Activated CD4-positive, alpha-beta T cell treated with anti-CD3 and anti-CD28 coated beads, Interleukin-2, amount 10 ng/mL, durations not matched to agents 24 days and 14 days (primary cell): ENCODE measurements at regions of chr1 and their contacts with region 1.

Region 1: GRCh38 chr1:92317836-92318493 is 19.1 kb downstream of the RPAP2 start:
- DNase-seq: peak; percentile 76
- H3K4me3 Mint-ChIP-seq: peak overlapping the region; percentile 61
- H3K27ac Mint-ChIP-seq: peak overlapping the region; percentile 76
- H3K4me1 Mint-ChIP-seq: peaks cover 54% of the 10 kb centered on the region
- H3K27me3 Mint-ChIP-seq: no peaks in the 10 kb centered on the region

Region 2: DNA sequence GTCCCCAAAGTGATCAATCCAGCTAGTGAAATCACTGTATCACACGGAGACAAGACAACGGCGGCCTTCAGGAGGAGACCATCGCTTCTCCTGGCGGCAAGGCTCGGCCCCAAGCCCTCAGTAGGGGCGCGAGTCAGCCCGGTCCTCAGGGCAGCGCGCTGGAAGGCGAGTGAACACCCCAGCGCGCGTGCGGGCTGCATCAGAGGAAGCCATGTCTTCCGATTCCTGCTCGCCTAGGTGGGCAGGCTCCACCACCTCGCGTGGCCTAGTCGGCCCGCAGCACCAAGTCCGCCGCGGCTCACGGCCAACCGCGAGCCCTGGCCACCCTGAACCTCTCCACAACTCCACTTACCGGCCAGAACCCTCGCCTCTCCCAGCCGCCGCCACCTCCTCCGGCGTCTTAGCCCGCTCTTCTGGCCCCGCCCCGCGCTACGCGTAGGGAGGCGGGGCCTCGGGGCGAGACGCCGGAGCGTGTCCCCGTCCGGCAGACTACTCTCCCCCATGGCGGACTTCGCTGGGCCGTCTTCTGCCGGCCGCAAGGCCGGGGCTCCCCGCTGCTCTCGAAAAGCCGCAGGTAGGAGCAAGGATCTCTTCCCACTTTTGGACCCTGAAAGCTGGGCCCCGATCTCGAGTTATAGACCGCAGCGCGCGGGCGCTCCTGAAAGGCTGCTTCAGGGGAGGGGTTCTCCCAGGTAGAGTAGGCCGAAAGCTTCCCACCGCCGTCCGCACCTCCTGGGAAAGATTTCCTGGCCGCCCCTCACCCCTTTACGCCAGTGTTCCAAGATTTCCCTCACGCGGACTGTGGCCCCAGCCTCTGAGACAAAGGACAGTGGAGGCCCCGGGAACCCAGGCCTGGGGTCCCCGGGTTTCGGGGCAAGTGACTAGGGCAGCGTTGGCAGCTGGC is 19.1 kb before region 1 on chr1 and contains the starts of genes GLMN and RPAP2:
- intact Hi-C with region 1: loop called (anchors 1 kb)
- DNase-seq: peak; percentile 94
- H3K4me3 Mint-ChIP-seq: peak within 1 kb of the TSS; percentile 99
- H3K27ac Mint-ChIP-seq: peak within 1 kb of the TSS; percentile 99
- H3K4me1 Mint-ChIP-seq: peaks cover 40% of the 10 kb centered on the region
- H3K27me3 Mint-ChIP-seq: no peaks in the 10 kb centered on the region
- total RNA-seq, gene GLMN: 24.2 and 28.5 TPM in 2 replicates
- total RNA-seq, gene RPAP2: 39.4 and 46.8 TPM in 2 replicates

Region 3: GRCh38 chr1:92367496-92367895 is 49.5 kb after region 1 on chr1:
- intact Hi-C with region 1: loop called (anchors 2 kb)
- DNase-seq: peak; percentile 65
- H3K4me3 Mint-ChIP-seq: peak overlapping the region; percentile 31
- H3K27ac Mint-ChIP-seq: no peak overlapping the region
- H3K4me1 Mint-ChIP-seq: peaks cover 42% of the 10 kb centered on the region
- H3K27me3 Mint-ChIP-seq: no peaks in the 10 kb centered on the region

Region 4: GRCh38 chr1:92458146-92458545 is 140.2 kb after region 1 on chr1:
- intact Hi-C with region 1: no loop called
- DNase-seq: no peak
- H3K4me3 Mint-ChIP-seq: no peak overlapping the region
- H3K27ac Mint-ChIP-seq: no peak overlapping the region
- H3K4me1 Mint-ChIP-seq: peaks cover 27% of the 10 kb centered on the region
- H3K27me3 Mint-ChIP-seq: no peaks in the 10 kb centered on the region

Region 5: DNA sequence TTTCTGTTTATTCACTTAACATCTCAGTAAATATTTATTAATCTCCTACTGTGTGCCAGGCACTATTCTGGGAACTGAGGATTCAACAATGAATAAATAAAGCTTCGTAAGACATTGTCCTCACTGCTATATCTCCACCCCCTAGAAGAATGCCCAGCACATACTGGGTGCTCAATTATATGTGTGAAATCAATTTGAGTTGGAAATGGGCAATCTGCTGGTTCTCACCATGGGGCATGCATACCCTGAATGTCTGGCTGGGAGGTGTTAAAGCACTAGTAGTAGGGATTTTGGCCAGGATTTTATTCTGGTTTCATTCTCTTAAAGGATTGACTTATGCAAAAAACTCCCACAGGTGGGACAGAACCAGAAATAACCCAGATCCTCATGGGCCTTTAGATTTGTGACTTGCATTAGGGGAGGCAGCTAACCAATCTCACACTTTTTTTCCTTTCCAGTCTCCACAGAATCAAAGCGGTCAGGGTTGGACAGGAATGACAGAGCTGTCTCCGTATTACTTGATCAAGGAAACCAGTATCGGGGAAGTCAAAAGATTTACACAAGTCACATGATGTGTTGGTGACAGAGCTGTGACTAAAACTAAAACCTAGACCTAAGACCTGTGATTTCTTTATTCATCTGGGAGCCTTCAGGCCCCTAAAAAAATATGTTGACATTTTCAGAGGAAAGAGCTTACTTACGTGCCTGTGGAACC is 156.0 kb after region 1 on chr1:
- intact Hi-C with region 1: loop called (anchors 2 kb)
- DNase-seq: peak; percentile 80
- H3K4me3 Mint-ChIP-seq: peak overlapping the region; percentile 48
- H3K27ac Mint-ChIP-seq: peak overlapping the region; percentile 89
- H3K4me1 Mint-ChIP-seq: peaks cover 67% of the 10 kb centered on the region
- H3K27me3 Mint-ChIP-seq: no peaks in the 10 kb centered on the region

Region 6: DNA sequence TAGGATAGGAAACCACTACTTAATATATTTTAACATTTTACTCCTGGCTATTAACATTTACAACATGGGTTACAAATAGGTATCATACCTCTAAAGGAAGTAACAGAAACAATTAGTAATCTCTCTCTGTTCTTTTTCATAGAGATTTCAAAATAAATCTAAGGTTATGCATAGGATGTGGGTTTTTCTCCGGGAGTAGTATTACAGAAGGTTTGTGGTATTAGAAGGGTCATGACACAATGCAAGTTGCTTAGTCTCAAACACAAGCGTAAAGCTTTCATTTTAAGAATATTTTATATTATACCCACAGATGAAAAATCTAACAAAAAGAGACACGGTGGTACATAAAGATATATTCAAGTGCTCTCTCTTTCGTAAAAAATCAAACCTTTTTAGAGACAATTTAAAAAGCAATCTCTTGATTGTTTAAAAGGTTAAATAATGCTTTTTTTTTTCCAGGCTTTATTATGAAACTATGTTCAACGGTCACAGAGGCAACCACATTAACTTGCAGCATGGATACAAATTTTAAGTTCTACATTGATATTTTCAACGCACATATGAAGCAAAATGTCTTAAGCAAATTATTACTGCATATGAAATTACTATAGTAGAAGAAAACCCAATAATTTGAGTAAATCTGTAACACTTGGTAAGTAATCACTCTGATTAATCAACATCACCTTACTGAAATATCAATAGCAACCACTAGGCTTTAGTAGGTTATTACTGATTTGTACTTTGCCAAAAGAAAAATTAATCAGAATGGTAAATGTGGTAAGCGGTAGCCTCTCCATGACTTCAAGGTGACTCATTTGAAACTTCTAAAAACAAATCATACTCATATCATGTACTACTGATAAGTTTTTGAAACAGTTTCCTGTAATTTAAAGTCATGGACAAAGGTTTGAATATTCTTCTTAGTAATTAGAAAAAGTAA is 266.1 kb after region 1 on chr1:
- intact Hi-C with region 1: loop called (anchors 1 kb)
- DNase-seq: no peak
- H3K4me3 Mint-ChIP-seq: peak overlapping the region; percentile 74
- H3K27ac Mint-ChIP-seq: peak overlapping the region; percentile 92
- H3K4me1 Mint-ChIP-seq: peaks cover 50% of the 10 kb centered on the region
- H3K27me3 Mint-ChIP-seq: no peaks in the 10 kb centered on the region